ENCODE measurements at regions of chr9 and their contacts with region 1.

Region 1: DNA sequence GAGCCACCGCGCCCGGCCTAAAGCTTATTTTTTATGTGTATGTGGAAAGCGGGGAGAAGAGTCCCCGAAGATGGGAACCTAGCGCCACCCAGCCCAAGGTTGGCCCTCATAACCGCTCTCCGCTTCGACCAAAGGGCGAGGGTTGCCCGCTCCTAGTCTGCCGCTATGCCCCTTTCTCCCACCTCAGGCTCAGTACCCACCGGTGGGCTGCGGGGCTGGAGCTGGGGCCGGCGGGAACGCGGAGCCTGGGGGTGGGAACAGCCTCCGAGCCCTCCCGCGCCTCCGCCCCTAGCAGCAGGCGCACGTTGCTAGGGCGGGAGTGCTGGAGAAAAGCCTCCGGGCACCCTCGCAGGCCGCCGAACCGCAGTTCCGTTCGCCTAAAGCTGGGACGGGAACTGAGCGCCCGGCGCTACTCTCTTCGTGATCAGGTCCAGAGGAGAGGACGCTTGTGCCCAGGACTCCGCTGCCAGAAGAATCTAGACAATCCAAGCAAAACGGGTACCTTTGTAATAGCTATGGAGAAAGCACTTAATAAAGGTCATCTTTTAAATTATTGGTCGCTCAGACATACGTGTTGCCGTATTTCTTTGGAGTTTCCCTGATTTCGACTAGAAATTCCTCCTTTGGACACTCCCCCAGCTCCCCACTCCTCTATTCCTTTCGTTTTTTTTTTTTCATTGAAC is at the start of gene WDR31:
- DNase-seq: peak; percentile 92
- H3K4me3 ChIP-seq: peak within 1 kb of the TSS; percentile 66
- H3K27ac ChIP-seq: peak within 1 kb of the TSS; percentile 66
- H3K4me1 ChIP-seq: peaks cover 13% of the 10 kb centered on the region
- H3K27me3 ChIP-seq: no peaks in the 10 kb centered on the region
- CTCF ChIP-seq: no peak
- total RNA-seq, gene WDR31: 1.3 and 2.4 TPM in 2 replicates

Region 2: GRCh38 chr9:113326230-113326629 is 13.9 kb before region 1 on chr9:
- CTCF ChIA-PET with region 1: no interaction called
- POLR2A ChIA-PET with region 1: interaction called, 10 read pairs
- intact Hi-C with region 1: no loop called
- DNase-seq: no peak
- H3K4me3 ChIP-seq: no peak overlapping the region
- H3K27ac ChIP-seq: no peak overlapping the region
- H3K4me1 ChIP-seq: no peaks in the 10 kb centered on the region
- H3K27me3 ChIP-seq: no peaks in the 10 kb centered on the region
- CTCF ChIP-seq: no peak

Region 3: DNA sequence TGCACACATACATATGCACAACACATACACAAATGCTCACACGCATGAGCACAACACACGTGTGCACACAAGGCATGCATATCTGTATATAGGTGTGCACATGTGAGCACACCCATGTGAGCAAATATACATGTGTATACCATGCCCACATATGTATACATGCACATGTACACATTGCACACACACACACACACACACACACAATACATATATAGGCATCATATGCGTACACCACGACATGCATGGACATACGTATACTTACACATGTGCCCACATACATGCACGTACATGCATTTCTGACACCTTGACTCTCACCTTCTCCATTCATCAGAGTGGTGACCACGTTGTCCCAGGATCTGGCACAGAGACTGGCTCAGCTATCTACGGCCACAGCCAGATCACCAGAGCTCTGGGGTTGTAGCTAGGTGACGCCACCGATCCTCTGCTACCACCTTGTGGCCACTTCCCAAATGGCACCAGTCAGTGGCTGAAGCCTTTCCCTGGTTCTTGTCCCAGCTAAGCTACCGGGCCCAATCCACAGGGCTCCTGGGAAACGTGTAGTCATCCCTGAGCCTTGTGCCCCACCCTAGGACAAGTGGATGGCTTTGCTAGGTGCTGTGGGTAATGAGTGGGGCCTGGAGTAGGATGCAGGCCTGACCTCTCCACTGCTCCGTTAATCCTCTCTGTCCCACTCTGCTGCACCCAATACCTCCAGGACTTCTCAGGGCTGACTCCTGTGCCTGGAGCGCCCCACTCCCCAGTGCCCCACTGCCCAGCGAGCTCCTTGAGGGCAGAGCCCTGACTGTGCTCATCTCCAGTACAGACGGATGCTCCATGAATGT is 317.8 kb after region 1 on chr9:
- CTCF ChIA-PET with region 1: no interaction called
- POLR2A ChIA-PET with region 1: no interaction called
- intact Hi-C with region 1: no loop called
- DNase-seq: peak; percentile 81
- H3K4me3 ChIP-seq: no peak overlapping the region
- H3K27ac ChIP-seq: no peak overlapping the region
- H3K4me1 ChIP-seq: peaks cover 4% of the 10 kb centered on the region
- H3K27me3 ChIP-seq: peaks cover 5% of the 10 kb centered on the region
- CTCF ChIP-seq: peak; percentile 93